Heart right ventricle (tissue), 16 donors: ENCODE measurements at regions of chr6 and their contacts with region 1.

Region 1: DNA sequence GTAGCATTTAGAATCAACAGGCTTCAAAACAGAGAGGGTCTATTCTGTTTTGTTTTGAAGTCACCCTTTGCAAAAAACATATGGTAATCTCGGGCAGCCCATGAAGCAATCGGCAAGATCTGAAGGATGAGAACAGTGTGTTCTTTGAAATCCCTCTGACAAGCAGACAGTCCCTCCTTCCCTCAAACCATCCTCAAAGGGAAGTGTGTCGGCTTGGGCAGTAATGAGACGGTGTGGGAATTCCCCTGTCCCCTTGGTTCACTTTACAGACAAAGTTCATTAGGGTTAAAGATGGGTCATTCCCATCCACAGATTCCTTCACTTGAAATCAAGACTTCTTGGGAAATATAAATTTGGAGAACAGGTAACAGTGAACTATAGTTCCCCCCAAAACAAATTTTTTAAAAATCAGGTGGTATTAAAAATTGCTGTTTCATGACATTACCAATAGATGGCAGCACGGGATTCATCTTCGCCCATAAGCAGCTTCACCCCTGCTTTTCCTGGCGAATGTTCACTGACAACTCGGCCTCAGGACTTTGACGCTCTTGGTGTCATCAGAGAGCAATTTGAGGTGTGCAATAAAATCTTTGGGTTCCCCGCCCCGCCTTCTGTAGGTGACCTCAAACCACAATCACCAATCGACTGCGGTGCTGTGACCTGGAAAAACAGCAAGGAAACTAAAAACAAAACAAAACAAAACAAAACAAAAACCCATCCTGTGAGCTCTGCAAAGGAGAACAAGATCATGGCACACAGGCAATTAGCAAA is 159.3 kb upstream of the TNFAIP3 start:
- DNase-seq: peak in 1 of 2 donors; percentile 71
- ATAC-seq: peak in 7 of 8 donors; percentile 57 to 73 (median 69)
- H3K4me3 ChIP-seq: peak overlapping the region in 3 of 10 donors; percentile 5 to 37 (median 20)
- H3K27ac ChIP-seq: peak overlapping the region in 1 of 10 donors; percentile 75
- H3K4me1 ChIP-seq: peaks cover 0 to 59% (median 13%) of the 10 kb centered on the region in 9 donors
- H3K27me3 ChIP-seq: no peaks in the 10 kb centered on the region
- CTCF ChIP-seq: peak; percentile 63 to 88 (median 80)

Region 2: GRCh38 chr6:137313928-137314855 is 393.6 kb before region 1 on chr6:
- intact Hi-C with region 1: no loop called
- DNase-seq: peak; percentile 69 to 74
- ATAC-seq: peak; percentile 79 to 96 (median 91)
- H3K4me3 ChIP-seq: peak overlapping the region in 5 of 10 donors; percentile 2 to 35 (median 20)
- H3K27ac ChIP-seq: peak overlapping the region in 1 of 10 donors; percentile 10
- H3K4me1 ChIP-seq: peaks cover 0 to 27% (median 13%) of the 10 kb centered on the region in 9 donors
- H3K27me3 ChIP-seq: no peaks in the 10 kb centered on the region
- CTCF ChIP-seq: peak; percentile 65 to 86 (median 81)

Region 3: DNA sequence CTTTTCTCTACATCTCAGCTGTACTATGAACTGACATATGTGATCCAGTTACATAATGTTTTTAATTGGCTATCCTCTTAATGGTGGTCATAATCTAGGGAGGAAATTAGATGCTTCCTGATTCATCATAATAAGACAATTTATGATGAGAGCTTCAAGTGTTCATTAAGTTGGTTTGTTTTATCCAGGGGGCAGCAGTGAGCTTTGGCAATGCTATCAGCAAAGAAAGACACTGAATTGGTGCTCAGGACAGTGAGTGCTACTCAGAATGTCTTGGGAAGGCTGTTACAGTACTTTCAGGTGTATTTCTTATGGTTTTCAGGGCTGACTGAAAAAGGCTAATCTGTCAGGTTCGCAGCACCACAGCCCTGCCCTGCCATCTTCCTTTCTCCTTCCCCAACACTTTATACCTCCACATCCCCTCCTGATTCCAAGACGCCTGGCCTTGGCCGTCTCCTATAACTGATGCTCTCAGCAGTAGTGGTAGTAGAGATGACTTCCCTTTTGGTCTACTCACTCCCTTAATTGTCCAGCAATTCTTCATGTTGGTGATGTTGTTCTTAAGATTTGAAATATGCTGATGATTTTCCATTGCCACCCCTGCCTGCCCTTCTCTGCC is 92.3 kb after region 1 on chr6:
- intact Hi-C with region 1: loop called in 2 of 10 experiments (anchors 5 kb)
- DNase-seq: peak in 1 of 2 donors; percentile 60
- ATAC-seq: peak in 6 of 8 donors; percentile 41 to 66 (median 58)
- H3K4me3 ChIP-seq: no peak overlapping the region
- H3K27ac ChIP-seq: no peak overlapping the region
- H3K4me1 ChIP-seq: peaks cover 0 to 8% (median 0%) of the 10 kb centered on the region in 9 donors
- H3K27me3 ChIP-seq: no peaks in the 10 kb centered on the region
- CTCF ChIP-seq: peak in 7 of 9 donors; percentile 46 to 69 (median 57)

Region 4: GRCh38 chr6:137873273-137873762 is 165.5 kb after region 1 on chr6:
- intact Hi-C with region 1: loop called in 4 of 10 experiments (anchors 2 to 5 kb)
- DNase-seq: peak in 1 of 2 donors; percentile 65
- ATAC-seq: peak; percentile 81 to 94 (median 86)
- H3K4me3 ChIP-seq: peak overlapping the region in 6 of 10 donors; percentile 14 to 75 (median 25)
- H3K27ac ChIP-seq: peak overlapping the region in 7 of 10 donors; percentile 7 to 83 (median 44)
- H3K4me1 ChIP-seq: peaks cover 0 to 77% (median 38%) of the 10 kb centered on the region in 9 donors
- H3K27me3 ChIP-seq: no peaks in the 10 kb centered on the region
- CTCF ChIP-seq: no peak

Region 5: GRCh38 chr6:137975188-137975940 is 267.6 kb after region 1 on chr6:
- intact Hi-C with region 1: loop called in 1 of 10 experiments (anchors 10 kb)
- DNase-seq: no peak
- ATAC-seq: no peak
- H3K4me3 ChIP-seq: no peak overlapping the region
- H3K27ac ChIP-seq: peak overlapping the region in 1 of 10 donors; percentile 62
- H3K4me1 ChIP-seq: peaks cover 0 to 28% (median 0%) of the 10 kb centered on the region in 9 donors
- H3K27me3 ChIP-seq: no peaks in the 10 kb centered on the region
- CTCF ChIP-seq: peak in 4 of 9 donors; percentile 30 to 42 (median 38)

Region 6: GRCh38 chr6:138109042-138109997 is 401.5 kb after region 1 on chr6:
- intact Hi-C with region 1: loop called in 8 of 10 experiments (anchors 5 to 10 kb)
- DNase-seq: peak; percentile 29 to 67
- ATAC-seq: peak in 3 of 8 donors; percentile 24 to 47 (median 43)
- H3K4me3 ChIP-seq: no peak overlapping the region
- H3K27ac ChIP-seq: no peak overlapping the region
- H3K4me1 ChIP-seq: peaks cover 0 to 22% (median 13%) of the 10 kb centered on the region in 9 donors
- H3K27me3 ChIP-seq: peaks cover 0 to 54% (median 26%) of the 10 kb centered on the region in 7 donors
- CTCF ChIP-seq: peak; percentile 88 to 98 (median 96)